ENCODE measurements at regions of chr19 and their contacts with region 1.

Region 1: DNA sequence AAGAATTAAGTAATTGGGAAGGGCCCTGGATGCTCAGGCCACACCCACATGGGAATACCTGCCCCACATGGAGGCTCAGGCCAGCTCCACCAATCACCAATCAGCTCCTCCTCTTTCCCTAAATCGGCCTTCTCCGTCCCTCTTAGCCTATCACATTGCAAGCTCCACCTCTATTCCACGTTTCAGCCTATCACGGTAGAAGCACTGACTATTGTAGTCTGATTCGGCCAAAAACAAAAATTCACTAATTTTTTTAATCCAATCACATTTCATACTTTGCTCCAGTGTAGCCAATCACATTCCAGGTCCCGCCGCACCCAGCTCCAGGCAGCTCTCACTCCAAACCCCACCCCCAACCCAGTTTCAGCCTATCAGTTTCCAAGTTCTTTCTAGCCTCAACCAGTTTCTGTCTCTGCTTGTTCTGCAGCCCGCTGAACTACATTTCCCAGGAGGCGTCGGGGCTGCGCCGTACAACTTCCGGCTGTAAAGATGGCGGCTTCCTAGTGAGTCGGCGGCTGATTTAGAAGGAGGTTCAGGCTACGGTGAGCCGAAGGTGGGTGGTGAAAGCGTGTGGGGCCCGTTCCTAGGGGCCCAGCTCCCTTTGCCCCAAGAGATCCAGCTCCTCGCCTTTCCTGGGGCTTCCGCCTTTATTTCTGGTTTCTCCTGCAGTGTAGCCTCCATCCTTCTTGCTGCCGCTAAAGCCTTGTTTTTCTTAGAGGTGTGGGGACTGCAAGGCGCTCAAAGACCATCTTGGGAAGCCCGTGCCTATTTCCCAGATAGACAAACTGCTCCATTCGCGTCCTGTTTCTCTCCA is at the start of gene BABAM1:
- DNase-seq: peak; percentile 96
- H3K4me3 Mint-ChIP-seq: peak within 1 kb of the TSS; percentile 89
- H3K27ac Mint-ChIP-seq: peak within 1 kb of the TSS; percentile 96
- H3K4me1 Mint-ChIP-seq: peaks cover 16% of the 10 kb centered on the region
- H3K27me3 Mint-ChIP-seq: no peaks in the 10 kb centered on the region
- total RNA-seq, gene BABAM1: 114 and 120 TPM in 2 replicates

Region 2: GRCh38 chr19:17075035-17075863 is 191.9 kb before region 1 on chr19 and contains the starts of genes HAUS8 and MYO9B:
- intact Hi-C with region 1: loop called (anchors 1 kb)
- DNase-seq: peak; percentile 99
- H3K4me3 Mint-ChIP-seq: peak within 1 kb of the TSS; percentile 99
- H3K27ac Mint-ChIP-seq: peak within 1 kb of the TSS; percentile 97
- H3K4me1 Mint-ChIP-seq: peaks cover 66% of the 10 kb centered on the region
- H3K27me3 Mint-ChIP-seq: no peaks in the 10 kb centered on the region
- total RNA-seq, gene HAUS8: 32.8 and 34.9 TPM in 2 replicates
- total RNA-seq, gene MYO9B: 134 and 137 TPM in 2 replicates

Region 3: GRCh38 chr19:17226002-17226933 is 40.9 kb before region 1 on chr19 and contains the start of gene OCEL1:
- intact Hi-C with region 1: loop called (anchors 1 kb)
- DNase-seq: peak; percentile 95
- H3K4me3 Mint-ChIP-seq: peak within 1 kb of the TSS; percentile 89
- H3K27ac Mint-ChIP-seq: peak within 1 kb of the TSS; percentile 98
- H3K4me1 Mint-ChIP-seq: peaks cover 4% of the 10 kb centered on the region
- H3K27me3 Mint-ChIP-seq: no peaks in the 10 kb centered on the region
- total RNA-seq, gene OCEL1: 17.0 and 19.6 TPM in 2 replicates

Region 4: GRCh38 chr19:17245244-17245984 is 21.8 kb before region 1 on chr19 and contains the start of gene NR2F6:
- intact Hi-C with region 1: loop called (anchors 1 kb)
- DNase-seq: no peak
- H3K4me3 Mint-ChIP-seq: peak within 1 kb of the TSS; percentile 87
- H3K27ac Mint-ChIP-seq: peak within 1 kb of the TSS; percentile 77
- H3K4me1 Mint-ChIP-seq: no peaks in the 10 kb centered on the region
- H3K27me3 Mint-ChIP-seq: peaks cover 14% of the 10 kb centered on the region
- total RNA-seq, gene NR2F6: 14.3 and 14.4 TPM in 2 replicates

Region 5: GRCh38 chr19:17292286-17293097 is 25.3 kb after region 1 on chr19:
- intact Hi-C with region 1: loop called (anchors 1 kb)
- DNase-seq: peak; percentile 69
- H3K4me3 Mint-ChIP-seq: peak overlapping the region; percentile 85
- H3K27ac Mint-ChIP-seq: peak overlapping the region; percentile 87
- H3K4me1 Mint-ChIP-seq: no peaks in the 10 kb centered on the region
- H3K27me3 Mint-ChIP-seq: no peaks in the 10 kb centered on the region

Region 6: GRCh38 chr19:17336872-17337722 is 69.9 kb after region 1 on chr19 and contains the start of gene GTPBP3:
- intact Hi-C with region 1: loop called (anchors 1 kb)
- DNase-seq: peak; percentile 95
- H3K4me3 Mint-ChIP-seq: peak within 1 kb of the TSS; percentile 87
- H3K27ac Mint-ChIP-seq: peak within 1 kb of the TSS; percentile 88
- H3K4me1 Mint-ChIP-seq: peaks cover 21% of the 10 kb centered on the region
- H3K27me3 Mint-ChIP-seq: peaks cover 2% of the 10 kb centered on the region
- total RNA-seq, gene GTPBP3: 64.2 and 72.0 TPM in 2 replicates

Region 7: GRCh38 chr19:17419621-17420466 is 152.7 kb after region 1 on chr19 and contains the start of gene MVB12A:
- intact Hi-C with region 1: loop called (anchors 1 kb)
- DNase-seq: peak; percentile 95
- H3K4me3 Mint-ChIP-seq: peak within 1 kb of the TSS; percentile 94
- H3K27ac Mint-ChIP-seq: peak within 1 kb of the TSS; percentile 94
- H3K4me1 Mint-ChIP-seq: peaks cover 17% of the 10 kb centered on the region
- H3K27me3 Mint-ChIP-seq: no peaks in the 10 kb centered on the region
- total RNA-seq, gene MVB12A: 40.8 and 42.7 TPM in 2 replicates

Region 8: GRCh38 chr19:17549085-17549740 is 282.0 kb after region 1 on chr19:
- intact Hi-C with region 1: no loop called
- DNase-seq: no peak
- H3K4me3 Mint-ChIP-seq: no peak overlapping the region
- H3K27ac Mint-ChIP-seq: no peak overlapping the region
- H3K4me1 Mint-ChIP-seq: no peaks in the 10 kb centered on the region
- H3K27me3 Mint-ChIP-seq: peaks cover 6% of the 10 kb centered on the region

Region 9: GRCh38 chr19:17654993-17655392 is 387.8 kb after region 1 on chr19:
- intact Hi-C with region 1: no loop called
- DNase-seq: no peak
- H3K4me3 Mint-ChIP-seq: no peak overlapping the region
- H3K27ac Mint-ChIP-seq: no peak overlapping the region
- H3K4me1 Mint-ChIP-seq: no peaks in the 10 kb centered on the region
- H3K27me3 Mint-ChIP-seq: no peaks in the 10 kb centered on the region

Measured in activated T-helper 1 cell treated with anti-CD3 and anti-CD28 coated beads, Interleukin-12 subunit alpha, Interleukin-12 subunit beta, Interleukin-2, Interleukin-4 antibody, amounts not matched to agents 30 ng/mL and 10 ng/mL and 1 ng/mL, durations not matched to agents 14 hours and 24 hours and 36 hours (primary cell).